BJ (cell line): ENCODE measurements at regions of chr17 and their contacts with region 1.

Region 1: GRCh38 chr17:68106085-68106484 is 70.5 kb downstream of the KPNA2 start:
- DNase-seq: no peak
- H3K4me3 ChIP-seq: no peak overlapping the region
- H3K27me3 ChIP-seq: no peaks in the 10 kb centered on the region
- CTCF ChIP-seq: no peak

Region 2: DNA sequence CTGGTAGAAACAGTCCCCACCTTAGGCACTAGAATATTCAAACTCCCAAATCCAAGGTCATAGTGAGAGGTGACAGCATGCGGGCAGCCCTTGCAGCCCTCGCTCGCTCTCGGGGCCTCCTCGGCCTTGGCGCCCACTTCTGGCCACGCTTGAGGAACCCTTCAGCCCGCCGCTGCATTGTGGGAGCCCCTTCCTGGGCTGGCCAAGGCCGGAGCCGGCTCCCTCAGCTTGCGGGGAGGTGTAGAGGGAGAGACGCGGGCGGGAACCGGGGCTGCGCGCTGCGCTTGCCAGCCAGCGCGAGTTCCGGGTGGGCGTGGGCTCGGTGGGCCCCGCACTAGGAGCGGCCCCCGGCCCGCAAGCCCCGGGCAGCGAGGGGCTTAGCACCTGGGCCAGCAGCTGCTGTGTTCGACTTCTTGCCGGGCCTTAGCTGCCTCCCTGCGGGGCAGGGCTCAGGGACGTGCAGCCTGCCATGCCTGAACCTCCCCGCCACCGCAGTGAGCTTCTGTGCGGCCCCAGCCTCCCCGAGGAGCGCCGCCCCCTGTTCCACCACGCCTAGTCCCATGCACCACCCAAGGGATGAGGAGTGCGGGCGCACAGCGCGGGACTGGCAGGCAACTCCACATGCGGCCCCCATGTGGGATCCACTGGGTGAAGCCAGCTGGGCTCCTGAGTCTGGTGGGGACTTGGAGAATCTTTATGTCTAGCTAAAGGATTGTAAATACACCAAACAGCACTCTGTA is 25.5 kb before region 1 on chr17:
- CTCF ChIA-PET with region 1: no interaction called
- POLR2A ChIA-PET with region 1: no interaction called
- DNase-seq: no peak
- H3K4me3 ChIP-seq: no peak overlapping the region
- H3K27me3 ChIP-seq: no peaks in the 10 kb centered on the region
- CTCF ChIP-seq: no peak

Region 3: DNA sequence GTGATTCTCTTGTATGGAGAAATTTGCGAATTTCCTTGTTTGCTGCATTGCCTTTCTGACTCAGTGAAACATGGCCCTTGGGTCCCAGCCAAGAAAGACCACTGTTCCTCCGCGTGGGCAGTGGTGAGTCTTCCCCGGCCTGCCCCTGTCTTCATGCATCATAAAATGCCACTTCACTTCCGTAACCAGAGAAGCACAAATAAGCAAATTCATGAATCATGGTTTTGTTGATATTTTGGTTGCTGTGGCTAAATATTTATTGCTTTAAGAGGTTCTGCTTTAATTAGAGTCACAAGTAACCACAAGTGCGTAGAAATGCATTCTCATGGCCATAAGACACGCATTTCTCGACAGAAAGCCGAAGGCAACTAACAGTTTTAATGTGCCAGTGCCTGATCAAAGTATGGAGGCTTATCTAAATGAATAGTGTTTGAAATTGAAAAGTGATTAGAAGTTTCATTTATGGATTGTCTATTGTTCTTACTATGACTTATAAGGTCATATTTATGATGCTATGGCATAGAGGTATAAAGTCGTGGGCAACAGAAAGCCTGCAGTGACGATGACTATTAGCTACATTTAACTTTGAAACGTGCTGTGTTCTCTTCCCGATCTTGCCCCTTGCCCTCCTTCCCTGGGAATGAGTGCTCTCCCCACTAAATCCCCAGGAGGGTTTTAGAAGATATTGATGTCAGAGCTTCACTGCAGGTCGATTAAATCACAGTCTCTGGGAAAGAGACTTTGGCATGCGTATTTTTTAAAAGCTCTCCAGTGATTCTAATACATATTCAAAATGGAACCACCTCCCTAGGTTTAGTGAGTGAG is 275.2 kb after region 1 on chr17:
- CTCF ChIA-PET with region 1: no interaction called
- POLR2A ChIA-PET with region 1: interaction called, 13 read pairs
- DNase-seq: peak; percentile 99
- H3K4me3 ChIP-seq: no peak overlapping the region
- H3K27me3 ChIP-seq: no peaks in the 10 kb centered on the region
- CTCF ChIP-seq: no peak